ENCODE measurements at regions of chr19 and their contacts with region 1.

Region 1: GRCh38 chr19:44845612-44846454 is at the start of gene NECTIN2:
- DNase-seq: peak; percentile 68 to 97 (median 84)

Region 2: GRCh38 chr19:44723952-44724319 is 121.9 kb before region 1 on chr19:
- intact Hi-C with region 1: loop called (anchors 5 kb)
- DNase-seq: peak; percentile 55 to 97 (median 78)

Region 3: GRCh38 chr19:44782729-44783128 is 63.1 kb before region 1 on chr19:
- intact Hi-C with region 1: loop called (anchors 5 kb)
- DNase-seq: no peak

Region 4: DNA sequence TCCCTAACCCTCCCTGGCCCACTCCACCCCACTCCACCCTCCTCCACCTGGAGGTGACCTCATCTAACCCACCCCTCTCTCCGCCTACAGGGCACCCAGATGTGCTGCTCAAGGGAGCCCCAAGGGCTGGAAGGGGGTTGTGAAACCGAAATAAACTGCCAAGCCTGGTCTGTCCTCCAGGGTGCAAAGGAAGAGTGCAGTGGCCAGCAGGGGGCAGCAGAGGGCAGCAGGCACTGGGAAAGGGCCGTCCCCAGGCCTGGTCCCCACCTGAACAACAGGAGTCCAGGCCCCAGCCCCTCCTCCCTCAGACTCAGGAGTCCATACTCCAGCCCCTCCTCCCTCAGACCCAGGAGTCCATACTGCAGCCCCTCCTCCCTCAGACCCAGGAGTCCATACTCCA is 45.4 kb before region 1 on chr19:
- intact Hi-C with region 1: loop called (anchors 2 kb)
- DNase-seq: peak; percentile 38 to 95 (median 76)

Region 5: DNA sequence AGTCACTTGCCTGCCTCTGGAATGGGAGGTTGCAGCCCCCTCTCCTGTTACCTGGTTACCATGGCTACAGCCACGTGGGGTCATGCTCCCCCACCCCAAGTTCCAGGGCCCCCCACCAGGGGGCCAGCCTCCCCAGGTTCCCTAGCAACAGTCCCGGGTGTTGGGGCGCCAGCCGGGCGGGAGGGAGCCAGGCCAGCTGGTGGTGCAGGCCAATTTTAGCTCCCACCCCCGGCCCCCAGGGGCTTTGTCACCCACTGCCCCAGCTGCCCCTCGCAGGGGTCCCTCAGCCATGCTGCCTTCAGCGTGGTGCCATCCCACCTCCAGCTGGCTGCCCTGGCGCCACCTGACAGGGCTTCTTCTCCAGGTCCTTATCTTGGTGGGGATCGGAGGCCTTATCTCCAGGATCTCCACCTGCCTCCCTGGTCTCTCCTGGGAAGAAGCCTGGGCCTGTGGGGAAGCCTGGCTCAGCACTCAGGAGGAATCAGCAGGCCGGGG is 408.3 kb after region 1 on chr19:
- intact Hi-C with region 1: no loop called
- DNase-seq: no peak

Measured in posterior cingulate gyrus (tissue), 11 donors.